CD14-positive monocyte (primary cell): ENCODE measurements at regions of chr2 and their contacts with region 1.

Region 1: DNA sequence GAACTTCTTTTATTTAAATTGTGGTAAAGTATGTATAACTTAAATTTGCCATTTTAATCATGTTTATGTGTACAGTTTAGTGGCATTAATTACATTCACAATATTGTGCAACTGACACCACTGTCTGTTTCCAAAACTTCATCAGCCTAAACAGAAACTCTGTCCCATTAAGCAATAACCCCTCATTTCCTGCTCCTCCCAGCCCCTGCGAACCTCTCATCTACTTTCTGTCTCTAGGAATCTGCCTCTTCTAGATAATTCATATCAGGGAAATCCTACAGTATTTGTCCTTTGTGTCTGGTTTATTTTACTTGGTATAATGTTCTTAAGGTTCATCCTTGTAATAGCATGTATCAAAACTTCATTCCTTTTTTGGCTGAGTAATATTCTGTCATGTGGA is 75.1 kb downstream of the BOLA3 start:
- DNase-seq: peak; percentile 39 to 74 (median 71)
- H3K4me3 ChIP-seq: peak overlapping the region in 1 of 3 experiments; percentile 52
- H3K4me3 Mint-ChIP-seq: peak overlapping the region; percentile 31 to 69
- H3K27ac ChIP-seq: peak overlapping the region; percentile 16 to 73
- H3K27ac Mint-ChIP-seq: peak overlapping the region; percentile 76 to 90 (median 88)
- H3K4me1 ChIP-seq: peaks cover 33 to 39% of the 10 kb centered on the region in 2 donors
- H3K4me1 Mint-ChIP-seq: peaks cover 53% of the 10 kb centered on the region
- H3K27me3 ChIP-seq: no peaks in the 10 kb centered on the region
- H3K27me3 Mint-ChIP-seq: no peaks in the 10 kb centered on the region
- CTCF ChIP-seq: no peak

Region 2: GRCh38 chr2:74025971-74026612 is 46.5 kb before region 1 on chr2:
- intact Hi-C with region 1: loop called in 1 of 2 experiments (anchors 5 kb)
- DNase-seq: peak in 1 of 3 donors; percentile 51
- H3K4me3 ChIP-seq: peak overlapping the region in 1 of 3 experiments; percentile 33
- H3K4me3 Mint-ChIP-seq: no peak overlapping the region
- H3K27ac ChIP-seq: peak overlapping the region; percentile 37 to 72
- H3K27ac Mint-ChIP-seq: peak overlapping the region; percentile 37 to 87 (median 78)
- H3K4me1 ChIP-seq: peaks cover 43 to 64% of the 10 kb centered on the region in 2 donors
- H3K4me1 Mint-ChIP-seq: peaks cover 71% of the 10 kb centered on the region
- H3K27me3 ChIP-seq: no peaks in the 10 kb centered on the region
- H3K27me3 Mint-ChIP-seq: peaks cover 0 to 2% (median 0%) of the 10 kb centered on the region in 3 donors
- CTCF ChIP-seq: no peak